ENCODE measurements at regions of chr1 and their contacts with region 1.

Region 1: GRCh38 chr1:11207898-11208611 is 18.9 kb downstream of the ANGPTL7 start:
- ATAC-seq: peak in 1 of 8 experiments; percentile 20
- H3K4me3 ChIP-seq: no peak overlapping the region
- H3K27ac ChIP-seq: no peak overlapping the region
- H3K4me1 ChIP-seq: no peaks in the 10 kb centered on the region

Region 2: DNA sequence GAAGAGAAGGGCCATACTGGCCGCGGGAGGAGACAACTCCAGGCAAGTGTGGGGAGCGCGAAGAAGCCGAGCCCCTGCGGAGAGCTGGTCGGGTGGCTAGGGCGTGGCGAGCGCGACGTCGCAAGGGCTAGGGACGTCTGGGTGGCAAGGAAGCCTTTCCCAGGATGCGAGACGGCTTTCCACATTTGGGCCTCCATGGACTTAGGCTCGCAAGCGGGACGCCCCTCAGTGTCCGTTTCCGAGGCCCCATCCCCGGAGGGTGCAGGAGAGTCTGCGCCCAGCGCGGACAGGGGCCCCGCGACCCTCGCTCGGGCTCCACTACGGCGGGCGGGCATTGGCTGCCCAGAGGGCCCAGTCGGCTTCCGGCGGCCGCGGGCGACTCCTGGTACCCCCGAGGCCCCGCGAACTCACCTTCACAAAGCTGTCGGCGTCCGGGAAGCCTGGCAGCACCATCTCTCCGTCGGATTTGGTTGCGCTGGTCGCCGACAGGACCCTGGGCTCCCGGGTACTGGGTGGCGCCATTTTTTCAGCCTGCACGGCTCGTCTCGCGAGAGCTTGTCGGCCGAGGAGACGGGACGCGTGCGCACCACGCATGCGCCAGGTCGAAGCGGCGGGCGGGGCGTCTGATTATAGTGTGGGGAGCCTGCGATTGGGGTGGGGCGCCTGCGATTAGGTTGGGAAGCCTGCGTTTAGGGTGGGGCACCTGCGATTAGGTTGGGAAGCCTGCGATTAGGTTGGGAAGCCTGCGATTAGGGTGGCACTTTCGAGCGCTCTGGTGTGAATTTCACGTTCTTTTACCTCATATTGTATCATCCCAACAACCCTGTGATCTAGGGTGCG is 108.5 kb before region 1 on chr1 and contains the start of gene EXOSC10:
- in situ Hi-C with region 1: loop called in 1 of 9 experiments (anchors 25 kb)
- ATAC-seq: peak; percentile 93 to 98 (median 96)
- H3K4me3 ChIP-seq: peak within 1 kb of the TSS; percentile 80 to 99 (median 92)
- H3K27ac ChIP-seq: peak within 1 kb of the TSS; percentile 72 to 91
- H3K4me1 ChIP-seq: peaks cover 8 to 10% of the 10 kb centered on the region in 2 donors
- total RNA-seq, gene EXOSC10: 39.0 to 88.7 (median 57.9) TPM

Region 3: GRCh38 chr1:11822096-11822495 is 614.0 kb after region 1 on chr1:
- in situ Hi-C with region 1: no loop called
- ATAC-seq: no peak
- H3K4me3 ChIP-seq: no peak overlapping the region
- H3K27ac ChIP-seq: no peak overlapping the region
- H3K4me1 ChIP-seq: no peaks in the 10 kb centered on the region